ENCODE measurements at regions of chr16 and their contacts with region 1.

Region 1: GRCh38 chr16:89700100-89700648 is 1.3 kb downstream of the SPATA2L start:
- DNase-seq: peak; percentile 96 to 100
- H3K4me3 ChIP-seq: peak overlapping the region; percentile 67
- H3K27ac ChIP-seq: peak overlapping the region; percentile 29; the same call in 1 of the 2 replicates
- H3K4me1 ChIP-seq: peaks cover 5% of the 10 kb centered on the region; the same call in 1 of the 2 replicates
- H3K27me3 ChIP-seq: no peaks in the 10 kb centered on the region
- CTCF ChIP-seq: peak; percentile 79

Region 2: DNA sequence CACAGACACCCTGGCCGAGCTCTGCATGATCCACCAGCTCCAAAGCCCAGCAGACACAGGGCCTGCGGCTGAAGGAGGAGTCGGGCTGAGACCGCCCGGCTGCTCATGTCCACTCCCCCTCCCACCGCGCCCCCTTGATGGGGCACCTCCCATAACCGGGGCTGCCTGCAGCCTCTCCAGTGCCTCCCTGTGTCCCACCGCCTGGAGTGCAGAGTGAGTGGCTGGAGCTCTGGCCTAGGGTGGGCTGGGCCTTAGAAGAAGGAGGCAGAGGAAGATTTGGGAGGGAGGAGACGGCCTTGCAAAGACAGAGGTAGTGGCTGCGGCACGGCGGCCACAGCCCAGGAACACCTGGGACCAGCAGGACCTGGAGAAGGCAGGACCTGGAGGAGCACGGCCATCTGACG is 727.2 kb before region 1 on chr16:
- CTCF ChIA-PET with region 1: no interaction called
- POLR2A ChIA-PET with region 1: interaction called, 12 read pairs
- intact Hi-C with region 1: no loop called
- DNase-seq: no peak
- H3K4me3 ChIP-seq: no peak overlapping the region
- H3K27ac ChIP-seq: no peak overlapping the region
- H3K4me1 ChIP-seq: no peaks in the 10 kb centered on the region
- H3K27me3 ChIP-seq: peaks cover 91% of the 10 kb centered on the region
- CTCF ChIP-seq: no peak

Region 3: GRCh38 chr16:89581045-89581690 is 119.0 kb before region 1 on chr16:
- CTCF ChIA-PET with region 1: no interaction called
- POLR2A ChIA-PET with region 1: interaction called, 12 read pairs
- intact Hi-C with region 1: no loop called
- DNase-seq: peak; percentile 78 to 87
- H3K4me3 ChIP-seq: no peak overlapping the region
- H3K27ac ChIP-seq: peak overlapping the region; percentile 61
- H3K4me1 ChIP-seq: peaks cover 28% of the 10 kb centered on the region
- H3K27me3 ChIP-seq: no peaks in the 10 kb centered on the region
- CTCF ChIP-seq: no peak

Region 4: DNA sequence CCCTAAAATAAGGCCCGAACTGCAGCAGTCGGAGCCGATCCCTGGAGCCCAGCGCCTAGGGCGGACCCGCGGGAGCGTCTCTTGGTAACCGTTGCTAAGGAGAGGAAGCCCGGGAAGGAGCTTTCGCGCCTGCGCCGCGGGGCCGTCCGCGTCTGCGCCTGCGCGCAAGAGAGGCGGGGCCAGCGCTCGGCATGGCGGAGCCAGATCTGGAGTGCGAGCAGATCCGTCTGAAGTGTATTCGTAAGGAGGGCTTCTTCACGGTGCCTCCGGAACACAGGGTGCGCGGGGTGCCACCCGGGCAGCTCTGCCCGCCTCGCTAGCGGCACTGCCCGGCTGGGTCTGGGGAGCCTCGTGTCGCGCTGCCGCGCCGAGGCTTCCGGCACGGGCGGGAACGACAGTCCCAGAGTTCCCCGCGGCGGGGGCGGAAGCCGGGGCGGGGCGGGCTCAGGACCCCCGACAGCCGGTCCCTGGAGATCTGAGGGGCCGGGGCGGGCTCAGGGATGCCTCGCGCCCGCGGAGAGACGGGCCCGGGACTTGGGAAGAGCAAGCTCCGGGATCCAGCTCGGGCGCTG is 13.6 kb before region 1 on chr16 and contains the start of gene CDK10:
- CTCF ChIA-PET with region 1: interaction called, 17 read pairs
- POLR2A ChIA-PET with region 1: no interaction called
- intact Hi-C with region 1: no loop called
- DNase-seq: peak; percentile 77 to 97
- H3K4me3 ChIP-seq: peak within 1 kb of the TSS; percentile 82
- H3K27ac ChIP-seq: peak within 1 kb of the TSS; percentile 40
- H3K4me1 ChIP-seq: peaks cover 11% of the 10 kb centered on the region
- H3K27me3 ChIP-seq: no peaks in the 10 kb centered on the region
- CTCF ChIP-seq: no peak
- total RNA-seq, gene CDK10: 76.6 and 110 TPM in 2 replicates

Region 5: GRCh38 chr16:89749647-89750046 is 49.5 kb after region 1 on chr16:
- CTCF ChIA-PET with region 1: no interaction called
- POLR2A ChIA-PET with region 1: no interaction called
- intact Hi-C with region 1: no loop called
- DNase-seq: no peak
- H3K4me3 ChIP-seq: no peak overlapping the region
- H3K27ac ChIP-seq: no peak overlapping the region
- H3K4me1 ChIP-seq: no peaks in the 10 kb centered on the region
- H3K27me3 ChIP-seq: no peaks in the 10 kb centered on the region
- CTCF ChIP-seq: no peak

Region 6: GRCh38 chr16:89873972-89874689 is 174.0 kb after region 1 on chr16:
- CTCF ChIA-PET with region 1: interaction called, 12 read pairs
- POLR2A ChIA-PET with region 1: interaction called, 16 read pairs
- intact Hi-C with region 1: no loop called
- DNase-seq: peak; percentile 71 to 96
- H3K4me3 ChIP-seq: peak overlapping the region; percentile 65
- H3K27ac ChIP-seq: peak overlapping the region; percentile 93
- H3K4me1 ChIP-seq: peaks cover 11% of the 10 kb centered on the region
- H3K27me3 ChIP-seq: no peaks in the 10 kb centered on the region
- CTCF ChIP-seq: no peak

Region 7: GRCh38 chr16:89893642-89894509 is 193.7 kb after region 1 on chr16:
- CTCF ChIA-PET with region 1: no interaction called
- POLR2A ChIA-PET with region 1: no interaction called
- intact Hi-C with region 1: no loop called
- DNase-seq: no peak
- H3K4me3 ChIP-seq: no peak overlapping the region
- H3K27ac ChIP-seq: no peak overlapping the region
- H3K4me1 ChIP-seq: no peaks in the 10 kb centered on the region
- H3K27me3 ChIP-seq: no peaks in the 10 kb centered on the region
- CTCF ChIP-seq: no peak

Region 8: GRCh38 chr16:90046971-90047713 is 347.0 kb after region 1 on chr16:
- CTCF ChIA-PET with region 1: no interaction called
- POLR2A ChIA-PET with region 1: interaction called, 20 read pairs
- intact Hi-C with region 1: no loop called
- DNase-seq: peak; percentile 58 to 80
- H3K4me3 ChIP-seq: peak overlapping the region; percentile 77
- H3K27ac ChIP-seq: no peak overlapping the region
- H3K4me1 ChIP-seq: peaks cover 34% of the 10 kb centered on the region
- H3K27me3 ChIP-seq: no peaks in the 10 kb centered on the region
- CTCF ChIP-seq: no peak

Measured in PC-9 (cell line).